ENCODE measurements at regions of chr20 and their contacts with region 1.

Region 1: DNA sequence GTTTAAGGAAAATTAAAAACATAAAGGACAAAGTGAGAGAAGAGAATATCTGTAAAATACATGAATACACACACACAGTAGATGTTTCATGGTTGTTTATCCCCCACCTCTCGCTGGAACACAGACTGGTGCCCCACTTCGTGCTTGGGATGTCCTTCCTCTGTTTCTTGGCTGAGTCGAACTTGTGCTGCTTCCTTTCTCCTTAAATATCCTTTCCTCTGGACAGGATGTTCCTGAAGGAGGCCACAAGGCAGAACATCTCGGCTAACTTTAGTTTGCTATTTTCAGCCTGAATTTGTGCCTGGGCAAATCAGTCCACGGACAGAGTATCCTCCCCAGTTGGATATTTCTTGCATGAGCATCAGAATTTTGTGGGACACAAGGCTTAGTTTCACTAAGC is 54.7 kb upstream of the ZMYND8 start:
- DNase-seq: no peak
- ATAC-seq: no peak
- H3K4me3 ChIP-seq: no peak overlapping the region
- H3K4me3 Mint-ChIP-seq: no peak overlapping the region
- H3K27ac ChIP-seq: no peak overlapping the region
- H3K27ac Mint-ChIP-seq: no peak overlapping the region
- H3K4me1 ChIP-seq: peaks cover 20% of the 10 kb centered on the region
- H3K4me1 Mint-ChIP-seq: peaks cover 20% of the 10 kb centered on the region
- H3K27me3 ChIP-seq: no peaks in the 10 kb centered on the region
- H3K27me3 Mint-ChIP-seq: no peaks in the 10 kb centered on the region
- CTCF ChIP-seq: no peak

Region 2: GRCh38 chr20:47610247-47610944 is 199.2 kb after region 1 on chr20:
- CTCF ChIA-PET with region 1: no interaction called
- POLR2A ChIA-PET with region 1: no interaction called
- intact Hi-C with region 1: loop called in 1 of 2 experiments (anchors 10 kb)
- DNase-seq: peak in 8 of 9 experiments; percentile 47 to 79 (median 58)
- ATAC-seq: peak; percentile 89
- H3K4me3 ChIP-seq: no peak overlapping the region
- H3K4me3 Mint-ChIP-seq: no peak overlapping the region
- H3K27ac ChIP-seq: peak overlapping the region in 1 of 2 experiments; percentile 37
- H3K27ac Mint-ChIP-seq: peak overlapping the region; percentile 63
- H3K4me1 ChIP-seq: peaks cover 34% of the 10 kb centered on the region
- H3K4me1 Mint-ChIP-seq: peaks cover 72% of the 10 kb centered on the region
- H3K27me3 ChIP-seq: no peaks in the 10 kb centered on the region
- H3K27me3 Mint-ChIP-seq: no peaks in the 10 kb centered on the region
- CTCF ChIP-seq: no peak